ENCODE measurements at regions of chr4 and their contacts with region 1.

Region 1: DNA sequence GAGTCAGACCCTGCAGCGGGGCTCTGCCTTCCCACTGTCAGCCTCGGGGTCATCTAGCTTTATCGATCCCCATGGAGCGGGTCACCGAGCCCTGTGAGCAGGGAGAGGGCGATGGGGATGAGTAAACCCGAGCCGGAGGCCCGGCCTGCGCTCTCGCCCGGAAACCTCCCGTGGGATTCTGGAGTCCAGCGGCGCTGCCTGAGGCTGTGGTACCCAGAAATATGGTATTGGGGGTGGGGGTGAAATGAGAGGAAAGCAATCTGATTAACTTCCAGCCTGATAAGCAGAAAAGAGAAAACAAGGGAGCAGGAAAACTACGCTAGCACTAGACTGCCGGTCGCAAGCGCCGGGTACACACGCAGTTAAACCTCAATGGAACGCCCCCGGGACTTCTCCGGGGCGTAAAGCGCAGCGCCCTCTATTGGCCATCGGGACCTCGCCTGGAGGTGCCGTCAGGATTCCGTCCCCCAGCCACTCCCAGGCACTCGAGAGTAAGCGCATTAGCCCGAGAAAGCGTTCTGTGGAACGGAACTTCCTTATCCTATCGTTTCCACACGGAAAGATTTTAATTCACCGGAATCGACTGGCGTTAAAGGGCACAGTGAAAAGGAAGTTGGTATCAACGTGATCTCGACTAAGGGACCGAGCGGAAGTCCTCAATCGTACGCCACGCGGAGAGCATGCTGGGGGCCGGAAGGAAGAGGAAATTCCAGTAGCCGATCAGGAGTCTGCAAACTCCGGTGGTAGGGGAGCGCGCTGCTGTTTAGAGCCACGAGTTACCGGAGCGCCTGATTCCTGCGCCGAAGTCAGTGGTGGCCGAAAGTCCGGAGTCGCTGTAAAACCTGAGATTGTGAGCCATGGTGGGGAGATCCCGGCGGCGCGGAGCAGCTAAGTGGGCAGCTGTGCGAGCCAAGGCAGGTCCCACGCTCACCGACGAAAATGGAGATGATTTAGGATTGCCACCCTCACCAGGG is at the start of gene UTP3:
- DNase-seq: peak; percentile 97 to 98
- ATAC-seq: peak; percentile 99
- H3K4me3 ChIP-seq: peak within 1 kb of the TSS; percentile 79 to 94
- H3K27ac ChIP-seq: peak within 1 kb of the TSS; percentile 90 to 98
- H3K4me1 ChIP-seq: peaks cover 0 to 5% of the 10 kb centered on the region in 2 donors
- H3K27me3 ChIP-seq: no peaks in the 10 kb centered on the region
- total RNA-seq, gene UTP3: 22.0 to 25.0 TPM

Region 2: DNA sequence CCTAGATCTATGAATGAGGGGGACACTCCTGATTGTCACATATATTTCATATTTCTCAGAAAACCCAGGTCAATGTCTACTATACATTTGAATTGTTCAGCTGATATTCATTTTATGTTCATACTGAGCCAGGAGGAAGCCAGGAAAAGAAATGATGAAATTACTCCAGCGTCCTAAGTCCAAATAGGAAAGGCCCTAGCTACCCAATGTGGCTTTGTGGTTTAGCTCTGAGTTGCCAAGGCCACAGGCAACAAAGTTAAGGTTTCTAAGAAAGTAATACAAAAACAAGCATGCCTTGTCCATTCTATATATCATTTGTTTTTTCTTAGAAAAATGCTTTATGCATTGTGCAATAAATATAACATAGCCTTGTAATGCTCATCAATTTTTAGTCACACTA is 718.0 kb before region 1 on chr4:
- intact Hi-C with region 1: no loop called
- DNase-seq: no peak
- ATAC-seq: no peak
- H3K4me3 ChIP-seq: no peak overlapping the region
- H3K27ac ChIP-seq: no peak overlapping the region
- H3K4me1 ChIP-seq: no peaks in the 10 kb centered on the region
- H3K27me3 ChIP-seq: no peaks in the 10 kb centered on the region

Region 3: GRCh38 chr4:70601422-70602039 is 86.6 kb before region 1 on chr4:
- intact Hi-C with region 1: loop called in 1 of 2 experiments (anchors 5 kb)
- DNase-seq: peak; percentile 58 to 76
- ATAC-seq: peak; percentile 69
- H3K4me3 ChIP-seq: no peak overlapping the region
- H3K27ac ChIP-seq: no peak overlapping the region
- H3K4me1 ChIP-seq: no peaks in the 10 kb centered on the region
- H3K27me3 ChIP-seq: no peaks in the 10 kb centered on the region

Region 4: DNA sequence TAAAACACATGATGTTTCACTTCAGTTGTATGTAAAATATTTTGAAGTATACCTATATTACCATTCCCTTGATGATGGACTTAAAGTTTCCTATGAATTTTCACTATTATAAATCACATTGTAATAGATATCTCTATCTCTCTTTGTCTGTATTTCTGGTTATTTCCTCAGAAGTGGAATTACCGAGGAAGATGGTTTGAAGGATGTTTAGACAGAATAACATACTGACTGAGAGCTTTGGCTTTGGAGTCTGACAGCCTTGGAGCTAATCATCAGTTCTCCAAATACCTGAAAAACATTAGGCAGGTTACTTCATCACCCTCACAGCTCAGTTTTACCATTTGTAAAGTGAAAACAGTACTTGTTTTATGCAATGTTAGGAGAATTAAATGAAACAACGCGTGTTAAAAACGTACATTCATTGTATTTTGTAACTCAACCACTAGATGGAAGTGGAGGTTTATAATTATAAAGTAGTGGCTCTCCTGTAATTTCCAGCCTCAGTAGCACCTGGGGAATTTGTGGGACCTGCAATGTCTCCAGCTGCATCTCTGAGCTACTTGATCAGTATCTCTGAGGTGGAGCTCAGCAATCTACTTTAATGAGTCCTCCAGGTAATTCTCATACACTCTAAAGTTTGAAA is 36.1 kb before region 1 on chr4:
- intact Hi-C with region 1: loop called in 1 of 2 experiments (anchors 5 kb)
- DNase-seq: no peak
- ATAC-seq: peak; percentile 72
- H3K4me3 ChIP-seq: no peak overlapping the region
- H3K27ac ChIP-seq: no peak overlapping the region
- H3K4me1 ChIP-seq: no peaks in the 10 kb centered on the region
- H3K27me3 ChIP-seq: no peaks in the 10 kb centered on the region

Region 5: GRCh38 chr4:70704331-70705145 is 16.4 kb after region 1 on chr4:
- intact Hi-C with region 1: loop called in 1 of 2 experiments (anchors 2 kb)
- DNase-seq: peak; percentile 86 to 93
- ATAC-seq: peak; percentile 92
- H3K4me3 ChIP-seq: peak overlapping the region; percentile 91 to 92
- H3K27ac ChIP-seq: peak overlapping the region; percentile 80 to 84
- H3K4me1 ChIP-seq: peaks cover 5 to 7% of the 10 kb centered on the region in 2 donors
- H3K27me3 ChIP-seq: no peaks in the 10 kb centered on the region

Region 6: DNA sequence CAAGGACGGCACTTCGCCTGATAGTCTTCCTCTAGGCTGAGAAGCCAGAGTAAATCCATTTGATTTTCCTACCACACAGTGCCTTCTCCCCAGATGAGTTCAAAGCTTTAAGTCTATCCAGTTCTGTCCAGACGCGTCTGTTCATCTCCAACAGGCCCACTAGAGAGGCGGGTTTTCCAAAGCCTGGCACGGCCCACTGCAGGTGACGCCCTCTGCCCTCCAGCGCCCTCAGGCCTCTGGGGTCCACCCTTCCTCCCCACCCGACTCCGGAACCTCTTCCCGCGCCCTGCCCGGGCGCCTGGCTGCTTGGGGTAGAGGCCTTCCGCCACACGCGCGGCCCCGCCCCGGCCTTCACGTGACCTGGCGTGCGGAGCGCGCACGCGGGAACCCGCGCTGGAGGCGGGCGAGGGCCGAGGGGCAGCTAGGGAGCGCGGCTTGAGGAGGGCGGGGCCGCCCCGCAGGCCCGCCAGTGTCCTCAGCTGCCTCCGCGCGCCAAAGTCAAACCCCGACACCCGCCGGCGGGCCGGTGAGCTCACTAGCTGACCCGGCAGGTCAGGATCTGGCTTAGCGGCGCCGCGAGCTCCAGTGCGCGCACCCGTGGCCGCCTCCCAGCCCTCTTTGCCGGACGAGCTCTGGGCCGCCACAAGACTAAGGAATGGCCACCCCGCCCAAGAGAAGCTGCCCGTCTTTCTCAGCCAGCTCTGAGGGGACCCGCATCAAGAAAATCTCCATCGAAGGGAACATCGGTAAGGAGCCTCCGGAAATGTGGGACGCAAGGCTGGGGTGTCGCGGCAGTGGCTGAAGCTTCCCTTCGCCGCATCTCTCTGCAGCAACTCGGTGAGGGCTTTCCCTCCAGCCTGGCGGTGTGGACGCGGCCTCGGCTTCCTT is 305.3 kb after region 1 on chr4 and contains the start of gene DCK:
- intact Hi-C with region 1: loop called in 1 of 2 experiments (anchors 10 kb)
- DNase-seq: peak; percentile 94 to 97
- ATAC-seq: peak; percentile 99
- H3K4me3 ChIP-seq: peak within 1 kb of the TSS; percentile 42 to 62
- H3K27ac ChIP-seq: peak within 1 kb of the TSS in 1 of 2 donors; percentile 60
- H3K4me1 ChIP-seq: peaks cover 0 to 3% of the 10 kb centered on the region in 2 donors
- H3K27me3 ChIP-seq: no peaks in the 10 kb centered on the region
- total RNA-seq, gene DCK: 10.7 to 11.2 TPM

Region 7: GRCh38 chr4:71860643-71861042 is 1172.5 kb after region 1 on chr4:
- intact Hi-C with region 1: no loop called
- DNase-seq: no peak
- ATAC-seq: no peak
- H3K4me3 ChIP-seq: no peak overlapping the region
- H3K27ac ChIP-seq: no peak overlapping the region
- H3K4me1 ChIP-seq: no peaks in the 10 kb centered on the region
- H3K27me3 ChIP-seq: no peaks in the 10 kb centered on the region

Measured in aorta (tissue), 5 donors.